Ascending aorta (tissue), 2 donors: ENCODE measurements at regions of chr1 and their contacts with region 1.

Region 1: DNA sequence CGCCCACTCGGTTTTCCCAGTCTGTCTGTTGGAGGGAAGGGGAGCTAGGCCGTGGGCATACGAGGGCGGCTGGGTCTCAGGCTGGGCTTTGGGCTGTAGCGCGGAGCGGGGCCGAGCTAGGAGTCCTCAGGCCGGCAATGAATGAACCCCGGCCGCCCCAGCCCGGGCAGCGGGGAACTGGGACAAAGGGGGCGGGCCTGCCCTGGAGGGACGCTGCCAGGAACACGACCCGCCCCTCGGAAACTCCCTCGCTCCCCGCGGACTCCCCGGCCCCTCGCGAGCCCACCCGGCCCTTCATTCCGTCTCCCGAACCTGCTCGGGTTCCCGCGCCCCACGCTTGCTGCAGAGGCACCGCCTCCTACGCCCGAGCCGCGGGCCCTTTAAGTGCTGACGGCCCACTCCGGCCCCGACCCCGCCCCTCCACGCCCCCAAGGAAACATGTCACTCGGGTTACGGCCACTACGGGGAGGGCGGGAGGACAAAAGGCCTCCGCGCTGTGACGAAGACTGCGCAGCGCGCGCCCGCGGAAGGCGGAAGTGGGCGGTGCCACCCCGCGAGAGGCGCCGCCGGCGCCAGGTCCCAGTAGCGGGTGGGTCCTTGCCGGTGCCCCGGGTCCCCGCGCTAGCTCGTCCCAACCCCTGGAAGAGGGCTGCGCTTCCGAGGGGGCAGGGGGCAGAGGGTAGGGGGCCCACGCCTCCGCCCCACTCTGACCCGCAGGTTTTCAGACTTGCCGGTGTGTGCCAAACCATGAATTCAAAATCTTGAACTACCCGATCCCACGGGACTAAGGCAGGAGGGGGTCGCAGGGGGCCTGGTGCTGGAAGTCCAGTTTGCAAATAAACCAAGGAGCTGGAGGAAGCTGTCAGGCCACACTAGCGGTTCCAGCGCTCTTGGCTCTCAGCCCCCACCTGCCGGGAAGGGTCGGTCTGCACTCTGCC is at the start of gene GALE:
- DNase-seq: peak; percentile 87 to 98
- H3K4me3 ChIP-seq: peak within 1 kb of the TSS; percentile 82 to 93
- H3K27ac ChIP-seq: peak within 1 kb of the TSS; percentile 87 to 97
- H3K4me1 ChIP-seq: peaks cover 9 to 14% of the 10 kb centered on the region in 2 donors
- H3K27me3 ChIP-seq: no peaks in the 10 kb centered on the region
- CTCF ChIP-seq: no peak
- total RNA-seq, gene GALE: 30.4 TPM

Region 2: DNA sequence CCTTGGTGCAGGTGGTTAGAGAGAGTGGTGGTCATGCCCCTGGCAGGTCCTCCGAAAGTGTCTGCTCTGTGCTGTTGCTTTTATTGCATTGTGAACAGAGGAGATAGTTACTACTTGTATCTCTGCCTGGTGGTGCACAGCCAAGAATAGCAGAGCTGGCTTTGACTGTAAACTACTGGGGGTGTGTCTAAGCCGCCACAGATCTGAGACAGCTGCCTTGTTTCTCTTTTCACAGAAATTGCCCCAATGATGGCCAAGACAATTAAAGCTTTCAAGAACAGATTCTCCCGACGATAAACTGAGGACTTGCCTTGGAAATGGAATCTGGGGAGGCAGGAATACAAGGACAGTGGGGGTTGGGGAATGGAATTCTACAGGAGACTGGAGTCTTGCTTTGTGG is 41.4 kb before region 1 on chr1:
- intact Hi-C with region 1: no loop called
- DNase-seq: no peak
- H3K4me3 ChIP-seq: no peak overlapping the region
- H3K27ac ChIP-seq: no peak overlapping the region
- H3K4me1 ChIP-seq: no peaks in the 10 kb centered on the region
- H3K27me3 ChIP-seq: no peaks in the 10 kb centered on the region
- CTCF ChIP-seq: no peak

Region 3: GRCh38 chr1:23825076-23825761 is 24.6 kb after region 1 on chr1 and contains the start of gene HMGCL:
- intact Hi-C with region 1: loop called (anchors 2 kb)
- DNase-seq: peak; percentile 58 to 95
- H3K4me3 ChIP-seq: peak within 1 kb of the TSS; percentile 77 to 97
- H3K27ac ChIP-seq: peak within 1 kb of the TSS; percentile 97
- H3K4me1 ChIP-seq: peaks cover 0 to 6% of the 10 kb centered on the region in 2 donors
- H3K27me3 ChIP-seq: no peaks in the 10 kb centered on the region
- CTCF ChIP-seq: no peak
- total RNA-seq, gene HMGCL: 7.3 TPM

Region 4: DNA sequence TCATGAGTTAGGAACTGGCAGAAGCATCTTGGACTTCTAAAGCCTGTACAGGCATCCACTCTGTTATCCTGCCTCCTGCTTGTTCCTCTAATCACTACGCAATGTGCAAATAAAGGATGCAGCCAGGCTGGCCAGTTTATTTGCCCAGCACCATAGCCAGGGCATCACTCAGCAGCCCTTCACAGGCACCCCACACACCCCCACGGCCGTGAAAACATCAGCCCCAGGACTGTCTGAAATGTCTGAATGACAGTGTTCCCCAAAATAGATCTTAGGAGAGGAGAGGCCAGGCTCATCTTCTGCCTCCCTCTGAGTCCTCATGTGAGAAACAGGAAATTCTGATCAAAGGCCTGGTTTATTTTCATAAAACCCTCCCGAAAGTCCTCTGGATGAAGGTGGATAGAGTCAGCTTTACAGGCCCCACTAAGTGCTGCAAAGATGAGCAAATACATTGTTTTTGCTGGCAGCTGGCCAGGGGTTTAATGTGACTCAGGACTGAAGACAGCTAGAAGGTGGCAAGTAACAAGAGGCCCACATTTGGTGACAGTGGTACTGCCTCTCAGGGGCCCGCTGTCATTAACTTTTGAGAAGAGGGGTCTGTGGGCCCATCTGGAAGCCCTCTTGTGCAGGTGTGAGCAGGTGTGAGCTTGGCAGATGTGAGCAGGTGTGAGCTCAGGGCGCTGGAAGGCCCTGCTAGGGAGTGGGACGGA is 551.4 kb after region 1 on chr1:
- intact Hi-C with region 1: no loop called
- DNase-seq: no peak
- H3K4me3 ChIP-seq: no peak overlapping the region
- H3K27ac ChIP-seq: no peak overlapping the region
- H3K4me1 ChIP-seq: no peaks in the 10 kb centered on the region
- H3K27me3 ChIP-seq: no peaks in the 10 kb centered on the region
- CTCF ChIP-seq: no peak